A673 (cell line): ENCODE measurements at regions of chr3 and their contacts with region 1.

Region 1: DNA sequence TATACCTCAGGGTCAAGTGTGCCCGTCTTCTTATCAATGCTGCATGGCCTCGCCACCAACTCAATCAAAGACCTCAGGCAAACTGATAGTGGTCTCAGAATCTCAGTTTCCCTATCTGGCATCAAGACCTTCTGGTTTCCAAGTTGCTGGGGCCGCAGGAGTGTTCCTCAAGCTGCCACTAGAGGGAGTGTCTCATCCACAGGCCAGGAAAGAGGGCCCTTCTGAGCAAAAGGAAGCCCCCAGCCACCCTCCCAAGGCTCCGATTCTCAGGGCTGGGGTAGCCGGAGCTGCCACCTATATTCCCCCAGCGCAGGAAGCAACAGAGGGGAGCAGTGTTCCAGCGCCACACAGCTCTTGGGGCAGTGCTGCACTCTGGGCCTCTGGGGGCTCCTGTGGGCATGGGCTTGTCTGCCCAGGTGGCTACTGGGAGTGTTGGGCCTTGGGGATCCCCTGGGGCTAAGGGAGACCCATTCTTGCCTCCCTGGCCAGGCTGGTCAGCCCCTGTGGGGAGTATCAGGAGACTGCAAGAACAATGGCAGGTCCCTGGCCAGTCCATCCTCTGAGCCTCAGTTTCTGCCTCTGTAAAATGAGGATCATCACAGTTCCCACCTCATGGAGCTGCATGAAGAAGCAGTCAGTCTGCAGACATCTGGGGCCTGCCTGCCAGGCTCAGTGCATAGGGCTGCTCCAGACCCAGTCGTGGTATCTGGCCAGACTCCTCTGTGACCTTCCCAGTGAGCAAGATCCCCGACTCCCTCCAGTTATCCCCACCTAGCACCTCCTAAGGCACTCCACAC is 23.4 kb upstream of the SEC13 start:
- DNase-seq: peak; percentile 60
- H3K4me3 ChIP-seq: no peak overlapping the region
- H3K27ac ChIP-seq: no peak overlapping the region
- H3K4me1 ChIP-seq: no peaks in the 10 kb centered on the region
- H3K27me3 ChIP-seq: no peaks in the 10 kb centered on the region
- CTCF ChIP-seq: peak; percentile 98

Region 2: DNA sequence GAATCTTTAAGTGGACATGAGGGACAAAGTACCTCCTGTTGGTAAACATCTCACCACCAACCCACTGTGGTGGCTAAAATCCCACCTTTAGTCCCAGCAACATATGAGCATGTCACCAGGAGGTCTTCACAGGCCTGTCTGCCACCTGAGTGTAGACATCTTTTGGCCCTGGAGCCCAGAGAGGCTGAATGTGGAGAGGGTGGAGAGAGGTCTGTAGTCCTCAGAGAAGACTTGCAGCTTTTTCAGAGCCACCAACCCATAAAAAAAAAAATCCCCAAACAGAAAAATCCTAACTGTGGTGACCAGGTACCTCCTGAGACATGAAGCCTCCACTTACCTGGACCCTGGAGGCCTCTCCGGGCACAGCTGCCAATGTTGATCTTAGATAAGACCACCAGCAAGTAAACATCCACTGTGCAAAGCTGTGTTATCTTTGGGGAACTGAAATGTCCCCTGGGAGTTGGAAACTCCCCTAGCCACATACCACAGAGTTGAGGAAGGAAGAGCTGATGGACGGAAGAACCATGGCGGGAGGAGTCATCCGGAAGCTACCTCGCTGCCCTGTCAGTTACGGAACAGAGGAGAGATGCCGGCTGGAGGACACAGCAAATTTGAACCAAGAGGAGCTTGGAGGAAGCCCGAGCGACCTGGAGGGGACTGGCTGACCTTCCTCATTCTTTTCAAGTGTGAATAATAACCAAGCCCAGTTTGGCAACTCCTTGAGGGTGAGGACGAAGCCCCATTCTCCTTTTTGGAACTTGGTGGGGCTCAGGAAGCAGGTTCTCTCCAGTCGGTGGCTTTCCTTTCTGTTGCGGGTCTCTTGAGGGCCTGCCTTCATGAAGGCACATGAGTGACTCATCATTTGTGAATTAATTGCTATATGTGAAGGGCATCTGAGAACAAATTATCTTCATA is 51.6 kb before region 1 on chr3 and contains the start of gene GHRL:
- CTCF ChIA-PET with region 1: no interaction called
- POLR2A ChIA-PET with region 1: no interaction called
- intact Hi-C with region 1: no loop called
- DNase-seq: peak; percentile 29
- H3K4me3 ChIP-seq: no peak within 1 kb of the TSS
- H3K27ac ChIP-seq: no peak within 1 kb of the TSS
- H3K4me1 ChIP-seq: no peaks in the 10 kb centered on the region
- H3K27me3 ChIP-seq: no peaks in the 10 kb centered on the region
- CTCF ChIP-seq: no peak
- total RNA-seq, gene GHRL: 1.0 and 2.0 TPM in 2 replicates

Region 3: DNA sequence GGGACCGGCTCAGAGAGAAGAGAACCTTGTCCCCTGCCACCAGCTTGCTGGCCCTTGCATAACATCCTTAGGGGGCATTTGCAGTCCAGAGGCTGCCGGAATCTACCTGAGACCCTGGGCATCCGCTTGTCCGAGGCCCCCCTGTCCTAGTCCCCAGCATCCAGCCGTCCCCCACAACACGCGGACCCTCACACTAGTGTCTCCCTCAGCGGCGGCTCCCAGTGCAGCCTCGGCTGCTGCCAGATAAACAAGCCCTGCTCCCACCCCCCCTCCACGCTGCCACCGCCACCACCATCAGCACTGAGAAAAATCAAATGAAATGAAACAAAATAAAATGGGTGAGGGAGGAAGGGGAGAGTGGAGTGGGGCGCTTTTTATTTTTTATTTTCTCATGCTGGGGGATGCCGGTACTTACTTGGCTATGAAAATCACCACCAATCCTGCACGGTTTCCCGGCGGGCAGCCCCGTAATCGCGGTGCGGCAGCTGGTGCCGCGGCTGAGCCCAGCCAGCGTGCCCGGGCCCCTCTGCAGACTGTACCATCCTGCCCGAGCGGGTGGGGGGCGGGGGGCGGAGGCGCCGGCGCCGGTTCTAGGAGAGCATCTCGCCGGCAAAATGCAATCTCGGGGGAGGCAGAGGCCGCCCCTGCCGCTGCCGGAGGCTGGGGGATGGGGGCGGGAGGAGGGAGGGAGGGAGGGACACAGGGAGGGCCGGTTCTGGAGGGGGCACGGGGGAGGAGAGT is 160.9 kb after region 1 on chr3 and contains the start of gene ATP2B2:
- CTCF ChIA-PET with region 1: no interaction called
- POLR2A ChIA-PET with region 1: no interaction called
- intact Hi-C with region 1: no loop called
- DNase-seq: peak; percentile 27
- H3K4me3 ChIP-seq: peak within 1 kb of the TSS; percentile 30
- H3K27ac ChIP-seq: no peak within 1 kb of the TSS
- H3K4me1 ChIP-seq: no peaks in the 10 kb centered on the region
- H3K27me3 ChIP-seq: peaks cover 20% of the 10 kb centered on the region
- CTCF ChIP-seq: no peak
- total RNA-seq, gene ATP2B2: 0.17 and 0.35 TPM in 2 replicates

Region 4: GRCh38 chr3:10738688-10739372 is 394.5 kb after region 1 on chr3:
- CTCF ChIA-PET with region 1: interaction called, 3 read pairs
- POLR2A ChIA-PET with region 1: no interaction called
- intact Hi-C with region 1: loop called (anchors 1 kb)
- DNase-seq: peak; percentile 77
- H3K4me3 ChIP-seq: peak overlapping the region; percentile 34
- H3K27ac ChIP-seq: no peak overlapping the region
- H3K4me1 ChIP-seq: no peaks in the 10 kb centered on the region
- H3K27me3 ChIP-seq: peaks cover 11% of the 10 kb centered on the region
- CTCF ChIP-seq: peak; percentile 96